Caco-2 (cell line): ENCODE measurements at regions of chrX and their contacts with region 1.

Region 1: DNA sequence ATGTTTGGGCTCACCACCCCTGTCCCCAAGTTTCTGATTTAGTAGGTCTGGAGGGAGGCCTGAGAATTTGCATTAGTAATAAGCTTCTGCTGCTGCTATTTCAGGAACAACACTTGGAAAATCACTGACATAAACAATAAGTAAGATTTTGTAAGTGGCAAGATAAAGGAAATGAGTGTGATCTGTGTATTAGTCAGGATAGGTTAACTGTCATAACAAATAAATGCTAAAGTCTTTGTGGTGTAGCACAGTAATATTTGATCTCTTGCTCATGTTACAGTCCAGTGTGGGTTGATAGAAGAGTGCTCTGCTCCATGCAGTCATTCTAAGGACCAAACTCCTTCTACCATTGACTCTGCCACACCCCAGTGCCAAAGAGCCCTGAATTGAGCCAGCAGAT is 67.0 kb downstream of the NHS start:
- DNase-seq: no peak
- H3K4me3 ChIP-seq: no peak overlapping the region
- H3K4me3 Mint-ChIP-seq: no peak overlapping the region
- H3K27ac Mint-ChIP-seq: no peak overlapping the region
- H3K4me1 ChIP-seq: 0 out of 2 replicates have a peak, but pooled peaks cover 2% of the 10 kb centered on the region
- H3K4me1 Mint-ChIP-seq: peaks cover 7% of the 10 kb centered on the region
- H3K27me3 ChIP-seq: no peaks in the 10 kb centered on the region
- H3K27me3 Mint-ChIP-seq: no peaks in the 10 kb centered on the region
- CTCF ChIP-seq: no peak

Region 2: DNA sequence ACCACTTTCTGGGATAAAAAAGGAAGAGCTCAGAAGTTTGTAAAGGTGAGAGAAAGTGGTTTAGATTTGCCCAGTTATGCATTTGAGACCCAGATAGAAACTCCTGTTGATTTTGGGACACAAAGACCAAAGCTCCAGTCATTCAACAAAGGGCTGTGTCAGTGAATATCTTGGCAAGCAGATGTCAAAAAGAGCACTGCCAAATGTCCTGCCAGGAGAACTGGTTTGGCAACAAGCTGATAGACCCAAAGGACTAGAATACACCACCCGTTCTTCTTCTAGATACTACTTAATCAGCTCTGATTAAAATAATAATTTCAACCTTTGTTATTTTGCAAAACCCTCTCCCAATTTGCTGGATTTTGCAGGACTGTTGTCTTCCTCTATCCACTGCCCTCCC is 54.4 kb after region 1 on chrX:
- CTCF ChIA-PET with region 1: no interaction called
- POLR2A ChIA-PET with region 1: no interaction called
- intact Hi-C with region 1: loop called (anchors 10 kb)
- DNase-seq: no peak
- H3K4me3 ChIP-seq: no peak overlapping the region
- H3K4me3 Mint-ChIP-seq: no peak overlapping the region
- H3K27ac Mint-ChIP-seq: no peak overlapping the region
- H3K4me1 ChIP-seq: peaks cover 5% of the 10 kb centered on the region; the same call in 1 of the 2 replicates
- H3K4me1 Mint-ChIP-seq: peaks cover 13% of the 10 kb centered on the region
- H3K27me3 ChIP-seq: no peaks in the 10 kb centered on the region; the same call in 1 of the 2 replicates
- H3K27me3 Mint-ChIP-seq: no peaks in the 10 kb centered on the region
- CTCF ChIP-seq: no peak

Region 3: GRCh38 chrX:17621566-17622270 is 179.8 kb after region 1 on chrX:
- CTCF ChIA-PET with region 1: no interaction called
- POLR2A ChIA-PET with region 1: no interaction called
- intact Hi-C with region 1: no loop called
- DNase-seq: no peak
- H3K4me3 ChIP-seq: no peak overlapping the region
- H3K4me3 Mint-ChIP-seq: no peak overlapping the region
- H3K27ac Mint-ChIP-seq: no peak overlapping the region
- H3K4me1 ChIP-seq: peaks cover 3% of the 10 kb centered on the region; the same call in 1 of the 2 replicates
- H3K4me1 Mint-ChIP-seq: no peaks in the 10 kb centered on the region
- H3K27me3 ChIP-seq: no peaks in the 10 kb centered on the region
- H3K27me3 Mint-ChIP-seq: no peaks in the 10 kb centered on the region
- CTCF ChIP-seq: no peak